Esophagus muscularis mucosa (tissue), 4 donors: ENCODE measurements at regions of chr1 and their contacts with region 1.

Region 1: DNA sequence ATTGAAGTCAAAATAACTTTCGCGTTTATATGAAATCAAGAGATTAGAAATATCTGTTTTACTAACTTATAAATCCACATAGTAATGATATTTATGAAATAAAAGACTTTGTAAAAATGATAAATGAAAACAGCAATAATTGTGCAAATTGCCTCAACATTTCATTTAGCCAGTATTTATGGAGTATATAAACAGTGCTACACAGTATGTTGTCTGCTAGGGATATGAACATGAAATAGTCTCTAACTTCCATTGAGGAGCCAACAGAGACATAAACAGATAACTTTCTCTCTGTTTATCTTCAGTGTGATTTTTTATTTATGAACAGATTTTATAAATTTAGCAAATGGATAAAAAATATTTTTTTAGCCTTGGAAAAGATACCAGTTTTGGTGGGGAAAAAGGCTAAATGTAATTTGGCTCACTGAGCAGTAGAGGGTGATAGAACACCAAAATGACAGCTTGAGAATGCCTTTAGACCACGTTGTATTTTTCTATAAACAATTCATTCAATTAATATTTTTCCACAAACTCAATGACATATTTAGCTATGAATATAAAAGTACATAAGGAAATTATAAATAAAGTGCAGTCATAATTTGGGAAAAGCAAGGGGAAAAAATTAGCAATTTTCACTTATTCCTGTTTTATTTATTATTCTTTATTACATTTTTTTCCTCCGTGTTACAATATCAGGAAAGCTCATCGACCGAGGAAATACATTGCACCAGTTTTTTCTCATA is 47.5 kb upstream of the EEIG2 start:
- DNase-seq: no peak
- H3K4me3 ChIP-seq: no peak overlapping the region
- H3K27ac ChIP-seq: no peak overlapping the region
- H3K4me1 ChIP-seq: no peaks in the 10 kb centered on the region
- H3K27me3 ChIP-seq: no peaks in the 10 kb centered on the region
- CTCF ChIP-seq: peak; percentile 84 to 85 (median 84)
- EP300 ChIP-seq: no peak
- POLR2A ChIP-seq: no peak

Region 2: GRCh38 chr1:108141621-108142020 is 370.8 kb before region 1 on chr1:
- intact Hi-C with region 1: no loop called
- DNase-seq: no peak
- H3K4me3 ChIP-seq: no peak overlapping the region
- H3K27ac ChIP-seq: no peak overlapping the region
- H3K4me1 ChIP-seq: no peaks in the 10 kb centered on the region
- H3K27me3 ChIP-seq: no peaks in the 10 kb centered on the region
- CTCF ChIP-seq: no peak
- EP300 ChIP-seq: no peak
- POLR2A ChIP-seq: no peak

Region 3: DNA sequence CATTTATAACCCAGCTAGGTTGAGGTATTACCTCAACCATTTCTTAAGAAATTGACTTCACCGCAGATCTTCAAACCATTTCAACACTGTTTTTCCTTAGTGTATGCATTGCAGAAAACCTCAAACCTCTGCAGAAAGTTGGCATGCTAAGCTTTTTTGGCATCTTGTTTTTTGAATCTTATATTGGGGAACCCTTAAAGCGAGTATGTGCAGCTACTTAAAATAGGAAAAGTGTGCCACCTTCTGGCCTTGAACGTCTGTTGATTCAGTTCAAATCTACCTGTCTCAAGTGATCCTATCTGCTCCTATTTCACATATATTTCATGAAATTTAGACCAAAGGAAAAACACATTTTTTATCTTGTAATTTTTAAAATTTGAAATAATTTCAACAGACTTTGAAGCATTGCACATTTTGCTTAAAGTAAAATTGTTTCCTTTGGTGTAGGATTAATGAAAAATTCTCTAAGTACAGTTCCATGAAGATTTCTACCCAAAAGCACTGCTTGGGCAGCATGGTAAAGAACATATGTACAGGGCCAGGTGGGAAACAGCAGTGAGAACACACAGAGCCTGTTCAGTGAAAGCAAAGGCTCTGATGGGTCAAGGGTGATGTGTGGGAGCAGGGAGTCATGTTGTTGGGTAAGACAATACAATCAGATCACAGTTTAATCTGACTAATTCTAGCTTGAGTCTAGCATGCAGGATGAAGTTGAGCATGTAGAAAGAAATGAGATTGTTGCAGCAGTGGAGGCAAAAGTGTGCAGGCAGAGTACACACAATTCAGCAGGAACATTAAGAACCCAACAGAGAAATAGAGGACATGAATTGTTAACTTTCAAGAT is 131.3 kb after region 1 on chr1:
- intact Hi-C with region 1: loop called (anchors 1 kb)
- DNase-seq: no peak
- H3K4me3 ChIP-seq: no peak overlapping the region
- H3K27ac ChIP-seq: no peak overlapping the region
- H3K4me1 ChIP-seq: no peaks in the 10 kb centered on the region
- H3K27me3 ChIP-seq: no peaks in the 10 kb centered on the region
- CTCF ChIP-seq: peak; percentile 64 to 68 (median 65)
- EP300 ChIP-seq: no peak
- POLR2A ChIP-seq: no peak